KBM-7 (cell line): ENCODE measurements at regions of chr18 and their contacts with region 1.

Region 1: DNA sequence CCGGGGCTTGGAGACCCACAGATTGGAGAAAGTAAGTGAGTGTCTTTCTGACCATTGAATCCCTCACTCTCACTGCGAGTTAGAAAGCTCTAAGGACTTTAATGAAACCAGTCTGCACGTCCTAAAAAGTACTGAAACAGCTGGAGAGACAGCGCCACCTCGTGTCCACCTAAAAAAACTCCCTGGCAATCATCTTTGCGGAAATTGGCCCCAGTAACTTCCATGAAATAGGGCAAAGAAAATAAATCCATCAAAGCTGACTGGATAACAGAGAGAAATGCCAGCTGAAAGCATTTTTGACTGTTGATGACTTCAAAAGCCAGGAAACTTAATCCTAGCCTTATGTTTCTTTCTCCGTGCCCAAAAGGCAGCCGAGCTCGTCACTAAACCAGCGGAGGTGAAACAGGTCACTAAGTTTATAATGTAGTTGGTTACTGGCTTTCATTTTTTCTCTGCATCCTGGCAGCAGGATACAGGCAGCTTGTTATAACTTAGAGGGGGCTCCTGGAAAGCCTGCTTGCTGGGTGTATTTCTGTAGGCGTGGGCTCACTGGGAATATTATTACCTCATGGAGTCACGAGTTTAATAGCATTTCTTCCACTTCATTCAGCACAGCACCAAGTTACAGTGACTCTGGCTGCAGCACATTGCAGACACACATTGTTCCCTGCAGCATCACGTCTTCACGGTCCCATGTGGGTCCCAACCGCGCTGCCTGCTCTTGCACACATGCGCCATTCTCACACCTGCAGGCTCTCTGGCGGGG is 266.5 kb downstream of the HRH4 start:
- DNase-seq: peak; percentile 77

Region 2: GRCh38 chr18:24530630-24531111 is 196.2 kb before region 1 on chr18:
- in situ Hi-C with region 1: no loop called
- DNase-seq: peak; percentile 88

Region 3: DNA sequence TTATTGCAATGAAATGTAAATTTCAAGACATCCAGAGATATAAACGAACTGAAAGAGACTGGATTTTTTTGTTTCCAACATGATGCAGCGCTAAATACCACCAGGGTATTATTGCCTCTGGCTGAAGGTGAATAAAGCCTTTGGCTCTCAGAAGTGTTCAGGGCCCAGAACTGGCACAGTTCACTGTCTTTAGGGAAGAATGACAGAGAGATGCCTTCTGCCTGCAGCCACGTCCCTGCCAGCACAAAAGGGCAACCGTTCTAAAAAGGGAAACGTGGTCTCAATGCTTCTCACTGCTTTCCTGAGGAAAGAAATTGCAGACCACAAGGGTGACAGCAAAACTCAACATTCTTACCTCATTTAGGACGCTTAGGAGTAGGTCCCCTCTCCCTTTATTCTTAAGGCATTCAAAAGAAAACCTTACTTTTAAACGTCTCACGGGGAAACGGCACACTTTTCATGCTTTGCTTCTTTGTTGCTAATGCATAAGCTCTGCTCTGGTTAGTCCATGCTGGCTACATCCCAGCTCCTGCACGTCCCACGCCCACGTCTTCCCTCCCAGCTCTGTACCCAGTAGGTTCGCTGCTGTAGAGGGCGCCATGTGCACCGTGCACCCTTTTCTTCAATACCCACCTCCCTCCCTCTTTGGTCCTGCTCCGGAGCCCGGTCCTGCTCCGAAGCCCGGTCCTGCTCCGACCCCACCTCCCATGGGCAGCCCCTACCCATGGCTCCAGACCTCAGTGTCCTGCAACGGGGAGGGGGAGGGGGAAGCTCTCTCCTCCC is 95.5 kb before region 1 on chr18:
- in situ Hi-C with region 1: loop called (anchors 25 kb)
- DNase-seq: no peak

Region 4: GRCh38 chr18:25503567-25504081 is 776.7 kb after region 1 on chr18:
- in situ Hi-C with region 1: no loop called
- DNase-seq: peak; percentile 47